Activated B cell treated with CpG ODN at 0.5 μM for 24 hours (primary cell): ENCODE measurements at regions of chr19 and their contacts with region 1.

Region 1: DNA sequence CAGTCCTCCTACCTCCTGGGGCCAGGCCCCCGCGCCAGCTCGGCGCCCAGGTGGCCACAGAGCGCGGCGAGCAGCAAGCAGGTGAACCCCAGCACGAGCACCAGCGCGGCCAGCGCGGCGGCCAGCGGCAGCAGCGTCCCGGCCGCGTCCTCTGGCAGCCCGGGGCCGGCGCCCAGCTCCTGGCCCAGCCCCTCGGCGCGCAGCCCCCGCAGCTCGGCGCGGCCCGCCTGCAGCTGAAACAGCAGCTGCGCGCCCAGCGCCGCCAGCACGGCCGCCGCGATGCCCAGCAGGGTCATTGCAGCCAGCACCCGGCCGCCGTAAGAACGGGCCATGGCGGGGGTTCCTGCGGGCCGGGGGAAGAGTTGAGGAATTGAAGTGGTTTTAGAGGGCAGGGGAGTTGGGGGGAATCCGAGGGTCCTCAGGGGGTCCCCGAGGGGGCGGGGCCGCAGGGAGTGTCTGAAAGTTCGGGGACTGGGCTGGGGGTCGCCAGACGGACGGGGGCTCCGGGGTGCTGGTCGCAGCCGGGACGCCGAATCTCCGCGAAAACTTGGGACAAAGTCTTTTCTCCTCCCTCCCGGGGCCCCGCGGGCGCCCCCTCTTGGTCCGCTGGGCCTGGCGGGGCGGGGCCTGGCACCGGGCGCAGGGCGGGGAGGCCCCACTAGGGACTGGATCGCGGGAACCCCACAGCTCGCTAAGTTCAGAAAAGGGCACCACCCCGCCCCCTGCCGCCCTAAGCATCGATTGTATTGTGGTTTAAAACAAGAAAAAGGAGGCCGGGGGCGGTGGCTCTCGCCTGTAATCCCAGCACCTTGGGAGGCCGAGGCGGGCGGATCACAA is at the start of gene TMEM221:
- DNase-seq: peak; percentile 49
- ATAC-seq: peak; percentile 86
- H3K4me3 Mint-ChIP-seq: peak within 1 kb of the TSS; percentile 19
- H3K27ac Mint-ChIP-seq: no peak within 1 kb of the TSS
- H3K4me1 Mint-ChIP-seq: peaks cover 10% of the 10 kb centered on the region
- H3K27me3 Mint-ChIP-seq: peaks cover 24% of the 10 kb centered on the region
- CTCF ChIP-seq: no peak
- total RNA-seq, gene TMEM221: not detected in 2 replicates

Region 2: DNA sequence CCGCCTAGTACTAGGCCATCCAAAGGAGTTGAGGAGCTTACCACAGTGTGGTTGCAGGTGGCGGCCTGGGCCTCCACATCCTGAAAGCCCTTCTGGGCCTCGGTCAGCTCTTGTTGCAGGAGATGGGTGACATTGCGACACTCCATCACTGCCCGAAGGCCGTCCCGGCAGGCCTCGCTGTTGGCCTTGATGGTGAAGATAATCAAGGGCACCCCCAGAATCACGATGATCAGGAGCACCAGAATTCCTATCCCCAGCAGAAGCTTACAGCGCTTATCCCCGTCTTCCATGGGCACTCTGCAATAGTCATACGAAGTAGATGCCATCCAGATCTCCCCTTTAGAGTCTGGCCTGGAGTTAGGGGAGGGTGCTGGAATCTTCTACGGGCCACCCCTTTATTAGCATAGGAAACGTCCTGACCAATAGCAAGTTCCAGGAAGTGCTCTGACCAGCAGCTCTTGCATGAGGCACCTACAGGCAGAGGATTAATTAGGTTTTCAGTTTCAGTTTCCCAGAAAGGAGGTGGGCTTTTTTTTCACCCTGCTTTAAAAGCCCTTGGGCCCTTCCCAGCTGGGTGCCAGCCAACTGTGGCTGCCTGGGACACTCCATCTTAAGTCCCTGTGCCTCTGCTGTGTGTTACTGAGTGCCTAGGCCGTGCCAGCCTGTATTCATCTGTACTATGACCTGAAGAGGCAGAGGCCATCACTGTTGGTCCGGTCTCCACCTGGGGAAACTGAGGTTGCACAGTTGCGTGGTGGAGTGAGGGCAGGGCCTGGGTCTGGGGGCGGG is 42.9 kb before region 1 on chr19 and contains the start of gene BST2:
- CTCF ChIA-PET with region 1: no interaction called
- POLR2A ChIA-PET with region 1: interaction called, 9 read pairs
- intact Hi-C with region 1: loop called (anchors 5 kb)
- DNase-seq: peak; percentile 42
- ATAC-seq: peak; percentile 86
- H3K4me3 Mint-ChIP-seq: peak within 1 kb of the TSS; percentile 92
- H3K27ac Mint-ChIP-seq: peak within 1 kb of the TSS; percentile 93
- H3K4me1 Mint-ChIP-seq: peaks cover 49% of the 10 kb centered on the region
- H3K27me3 Mint-ChIP-seq: no peaks in the 10 kb centered on the region
- CTCF ChIP-seq: no peak
- total RNA-seq, gene BST2: 120 and 121 TPM in 2 replicates